PC-3 (cell line): ENCODE measurements at regions of chr11 and their contacts with region 1.

Region 1: DNA sequence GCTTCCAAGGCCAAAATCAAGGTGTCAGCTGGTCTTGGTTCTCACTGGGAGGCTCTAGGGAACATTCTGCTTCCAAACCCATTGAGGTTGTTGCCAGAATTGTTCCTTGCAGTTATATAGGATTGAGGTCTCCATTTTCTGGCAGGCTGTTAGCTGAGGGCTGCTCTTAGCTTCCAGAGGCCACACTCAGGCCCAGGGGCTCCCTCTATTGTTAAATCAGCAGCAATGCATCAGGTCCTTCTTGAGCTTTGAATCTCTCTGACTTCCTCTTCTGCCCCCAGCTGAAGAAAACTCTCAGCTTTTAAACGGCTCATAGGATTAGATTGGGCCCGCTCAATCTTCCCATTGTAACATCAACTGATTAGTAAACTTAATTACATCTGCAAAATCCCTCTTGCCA is 39.3 kb upstream of the BSX start:
- DNase-seq: peak; percentile 80
- ATAC-seq: peak; percentile 71
- H3K4me3 ChIP-seq: no peak overlapping the region
- H3K27ac ChIP-seq: no peak overlapping the region
- H3K4me1 ChIP-seq: peaks cover 5% of the 10 kb centered on the region; the same call in 1 of the 2 replicates
- H3K27me3 ChIP-seq: no peaks in the 10 kb centered on the region; the same call in 1 of the 2 replicates
- CTCF ChIP-seq: peak; percentile 87

Region 2: GRCh38 chr11:122578168-122578825 is 442.7 kb before region 1 on chr11:
- CTCF ChIA-PET with region 1: interaction called, 4 read pairs
- POLR2A ChIA-PET with region 1: no interaction called
- intact Hi-C with region 1: loop called (anchors 2 kb)
- DNase-seq: peak; percentile 25
- ATAC-seq: no peak
- H3K4me3 ChIP-seq: no peak overlapping the region
- H3K27ac ChIP-seq: no peak overlapping the region
- H3K4me1 ChIP-seq: peaks cover 12% of the 10 kb centered on the region
- H3K27me3 ChIP-seq: no peaks in the 10 kb centered on the region
- CTCF ChIP-seq: peak; percentile 44; the same call in 1 of the 2 replicates

Region 3: DNA sequence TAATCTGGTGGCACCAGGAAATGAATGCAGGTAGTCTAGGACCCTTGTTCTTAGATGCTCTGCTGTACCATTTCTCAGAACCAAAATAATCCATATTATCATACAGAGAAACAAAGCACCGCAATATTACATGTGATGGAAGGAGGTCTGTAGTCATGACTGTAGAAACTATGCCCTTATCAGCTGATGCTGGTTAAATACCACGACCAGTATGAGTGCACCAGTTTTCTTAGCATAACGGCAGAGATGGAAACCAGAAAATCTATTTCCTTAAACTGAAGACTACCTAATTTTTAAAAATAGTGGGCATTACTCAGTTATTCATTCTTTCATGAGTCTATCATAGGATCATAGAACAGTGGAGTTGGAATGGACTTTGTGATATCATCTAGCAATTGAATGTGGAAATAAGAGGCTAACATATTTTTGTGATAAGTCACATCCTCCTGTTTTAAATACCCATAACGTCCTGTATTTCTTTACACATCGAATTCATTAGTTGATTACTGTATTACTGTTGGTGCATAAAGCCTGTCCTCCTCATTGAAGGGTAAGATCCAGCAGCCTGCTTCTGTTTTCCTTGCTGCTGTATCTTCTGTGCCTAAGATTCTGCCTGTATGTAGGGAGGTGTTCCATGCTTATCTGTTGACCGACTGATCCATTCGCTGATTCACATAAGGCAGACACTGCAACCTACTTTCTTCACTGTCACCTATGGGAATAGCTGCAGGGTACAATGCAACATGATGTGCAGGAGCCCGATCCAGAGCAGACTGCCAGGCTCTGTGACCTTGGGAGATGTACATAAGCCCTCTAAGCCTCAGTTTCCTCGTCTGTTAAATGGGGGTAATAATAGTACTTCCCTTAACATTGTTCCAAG is 123.1 kb before region 1 on chr11:
- CTCF ChIA-PET with region 1: interaction called, 14 read pairs
- POLR2A ChIA-PET with region 1: no interaction called
- intact Hi-C with region 1: no loop called
- DNase-seq: peak; percentile 61
- ATAC-seq: peak; percentile 77
- H3K4me3 ChIP-seq: no peak overlapping the region
- H3K27ac ChIP-seq: no peak overlapping the region
- H3K4me1 ChIP-seq: peaks cover 12% of the 10 kb centered on the region
- H3K27me3 ChIP-seq: no peaks in the 10 kb centered on the region
- CTCF ChIP-seq: no peak

Region 4: GRCh38 chr11:122910775-122911174 is 110.2 kb before region 1 on chr11:
- CTCF ChIA-PET with region 1: interaction called, 4 read pairs
- POLR2A ChIA-PET with region 1: no interaction called
- intact Hi-C with region 1: loop called (anchors 1 kb)
- DNase-seq: peak; percentile 53
- ATAC-seq: peak; percentile 50
- H3K4me3 ChIP-seq: no peak overlapping the region
- H3K27ac ChIP-seq: no peak overlapping the region
- H3K4me1 ChIP-seq: no peaks in the 10 kb centered on the region
- H3K27me3 ChIP-seq: no peaks in the 10 kb centered on the region
- CTCF ChIP-seq: peak; percentile 72

Region 5: GRCh38 chr11:122981388-122982264 is 39.3 kb before region 1 on chr11 and contains the start of gene BSX:
- CTCF ChIA-PET with region 1: no interaction called
- POLR2A ChIA-PET with region 1: no interaction called
- intact Hi-C with region 1: no loop called
- DNase-seq: peak; percentile 55
- ATAC-seq: peak; percentile 51
- H3K4me3 ChIP-seq: no peak within 1 kb of the TSS
- H3K27ac ChIP-seq: no peak within 1 kb of the TSS
- H3K4me1 ChIP-seq: no peaks in the 10 kb centered on the region
- H3K27me3 ChIP-seq: peaks cover 97% of the 10 kb centered on the region
- CTCF ChIP-seq: no peak
- total RNA-seq, gene BSX: not detected in 2 replicates